Endothelial cell of umbilical vein (primary cell): ENCODE measurements at regions of chr4 and their contacts with region 1.

Region 1: DNA sequence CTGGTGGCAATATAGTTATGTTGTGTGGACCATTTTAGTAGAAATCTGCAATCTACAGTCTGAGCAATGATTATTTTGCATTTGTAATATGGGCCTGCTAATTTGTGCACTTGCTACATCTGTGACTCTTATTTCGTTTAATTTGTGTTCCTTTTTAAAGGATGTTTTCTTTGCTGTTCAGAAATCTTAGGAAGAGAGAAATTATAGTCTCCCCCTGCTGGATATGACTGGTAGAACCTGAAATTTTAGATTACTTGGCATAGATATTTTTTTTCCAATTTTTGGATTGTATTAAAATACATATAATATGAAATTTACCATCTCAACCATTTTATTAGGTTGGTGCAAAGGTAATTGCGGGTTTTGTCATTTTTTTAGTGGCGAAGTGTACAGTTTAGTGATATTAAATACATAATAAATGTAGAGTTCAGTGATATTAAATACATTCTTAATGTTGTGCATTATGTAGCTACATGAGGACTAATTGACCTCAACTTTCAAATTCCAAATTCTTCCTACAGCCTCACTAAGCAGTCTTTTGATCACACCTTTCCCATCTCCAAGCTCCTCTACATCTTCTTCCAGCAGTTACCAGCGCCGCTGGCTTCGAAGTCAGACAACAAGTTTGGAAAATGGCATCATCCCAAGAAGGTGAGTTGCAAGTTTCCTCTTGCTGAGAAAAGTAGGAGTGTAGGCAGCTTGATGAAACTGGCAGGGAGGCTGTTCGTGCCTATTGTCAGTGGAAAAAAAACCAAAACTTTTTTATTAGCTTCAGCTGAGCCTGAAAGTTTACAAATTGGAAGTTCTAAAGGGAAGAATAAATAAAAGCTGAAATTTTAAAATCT is 82.2 kb downstream of the FNIP2 start:
- DNase-seq: peak; percentile 66
- H3K4me3 ChIP-seq: no peak overlapping the region
- H3K27ac ChIP-seq: no peak overlapping the region
- H3K4me1 ChIP-seq: no peaks in the 10 kb centered on the region
- H3K27me3 ChIP-seq: no peaks in the 10 kb centered on the region
- CTCF ChIP-seq: peak; percentile 27 to 31
- POLR2A ChIP-seq: no peak

Region 2: DNA sequence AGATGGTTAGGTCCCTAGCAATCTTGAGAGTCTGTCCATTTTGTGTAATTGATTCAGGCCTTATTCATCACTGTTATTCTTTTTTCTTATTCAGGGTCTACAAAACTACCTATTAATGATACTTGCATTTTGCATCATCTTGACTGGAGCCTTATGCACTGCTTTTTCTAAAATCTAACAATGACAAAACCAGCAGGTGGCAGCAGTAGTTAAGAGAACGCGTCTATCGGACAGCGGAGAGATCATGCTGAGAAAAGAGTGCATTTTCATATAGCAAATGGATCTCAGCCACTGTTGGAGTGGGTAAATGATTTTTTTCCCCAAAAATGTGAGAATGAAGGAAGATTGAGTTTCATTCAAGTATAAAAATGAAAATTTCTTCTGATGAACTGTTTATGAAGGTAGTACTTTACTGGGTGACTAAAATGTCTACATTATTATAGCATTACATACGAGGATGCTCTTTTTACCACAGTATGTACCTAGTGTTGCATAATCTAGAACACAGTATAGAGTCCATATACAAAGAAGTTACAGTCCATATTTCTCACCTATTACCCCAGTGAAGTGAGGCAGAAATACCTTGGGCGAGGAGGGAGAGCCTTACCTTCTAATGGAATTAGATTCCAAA is 597.6 kb before region 1 on chr4:
- CTCF ChIA-PET with region 1: no interaction called
- POLR2A ChIA-PET with region 1: no interaction called
- dilution Hi-C with region 1: no loop called
- intact Hi-C with region 1: loop called (anchors 5 kb)
- DNase-seq: peak; percentile 71
- H3K4me3 ChIP-seq: no peak overlapping the region
- H3K27ac ChIP-seq: no peak overlapping the region
- H3K4me1 ChIP-seq: no peaks in the 10 kb centered on the region
- H3K27me3 ChIP-seq: no peaks in the 10 kb centered on the region
- CTCF ChIP-seq: peak; percentile 60
- POLR2A ChIP-seq: no peak

Region 3: GRCh38 chr4:158722917-158723793 is 127.9 kb before region 1 on chr4 and contains the start of gene PPID:
- CTCF ChIA-PET with region 1: interaction called, 26 read pairs
- POLR2A ChIA-PET with region 1: no interaction called
- dilution Hi-C with region 1: no loop called
- intact Hi-C with region 1: no loop called
- DNase-seq: peak; percentile 80
- H3K4me3 ChIP-seq: peak within 1 kb of the TSS; percentile 67 to 87 (median 76)
- H3K27ac ChIP-seq: peak within 1 kb of the TSS; percentile 68
- H3K4me1 ChIP-seq: peaks cover 8% of the 10 kb centered on the region
- H3K27me3 ChIP-seq: no peaks in the 10 kb centered on the region
- CTCF ChIP-seq: no peak
- POLR2A ChIP-seq: peak; percentile 93
- total RNA-seq, gene PPID: 24.7 and 25.7 TPM in 2 replicates

Region 4: GRCh38 chr4:158768555-158769174 is 82.4 kb before region 1 on chr4 and contains the start of gene FNIP2:
- CTCF ChIA-PET with region 1: interaction called, 22 read pairs
- POLR2A ChIA-PET with region 1: no interaction called
- dilution Hi-C with region 1: no loop called
- intact Hi-C with region 1: loop called (anchors 1 kb)
- DNase-seq: peak; percentile 80
- H3K4me3 ChIP-seq: peak within 1 kb of the TSS; percentile 59 to 80 (median 75)
- H3K27ac ChIP-seq: peak within 1 kb of the TSS; percentile 68
- H3K4me1 ChIP-seq: peaks cover 31% of the 10 kb centered on the region
- H3K27me3 ChIP-seq: no peaks in the 10 kb centered on the region
- CTCF ChIP-seq: no peak
- POLR2A ChIP-seq: peak; percentile 53
- total RNA-seq, gene FNIP2: 13.6 and 14.4 TPM in 2 replicates

Region 5: DNA sequence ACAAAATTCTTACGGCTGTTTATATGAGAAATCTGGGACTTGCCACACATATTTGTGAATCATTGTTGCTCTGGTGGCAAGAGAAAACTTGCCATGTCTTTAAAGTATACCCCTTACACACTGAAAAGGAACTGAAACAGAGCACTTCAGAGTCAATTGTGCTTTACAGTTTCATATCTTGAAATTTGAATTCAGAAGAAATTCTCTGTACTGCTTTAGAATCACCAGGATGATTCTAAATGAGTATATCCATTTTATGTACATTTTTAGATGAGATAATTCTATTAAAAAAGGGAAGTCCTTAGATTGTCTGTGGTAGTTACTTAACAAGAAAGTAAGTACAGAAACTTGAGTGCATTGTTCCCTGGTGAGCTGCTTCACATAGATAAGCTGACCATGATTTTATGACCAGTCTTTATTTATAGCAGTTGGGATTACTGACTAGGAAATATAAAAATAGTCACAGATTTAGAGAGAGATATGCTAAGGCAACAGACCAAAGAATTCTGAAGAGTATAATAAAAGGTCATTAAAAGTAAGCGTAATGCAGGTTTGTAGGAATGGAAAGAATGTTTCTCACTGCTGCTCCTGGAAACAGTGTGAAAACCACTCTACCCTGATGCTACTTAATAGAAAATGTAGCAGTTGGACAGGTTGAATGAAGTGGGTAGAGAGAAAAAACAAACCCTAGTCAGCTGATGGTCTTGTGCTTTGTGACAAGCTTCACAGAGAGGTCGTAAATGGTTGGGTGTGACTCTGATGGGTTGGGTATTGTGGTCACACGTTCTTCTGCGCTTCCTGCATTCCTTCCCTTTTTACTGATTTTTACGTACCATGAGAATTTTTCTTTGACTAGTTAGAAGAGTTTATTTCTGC is 41.2 kb before region 1 on chr4:
- CTCF ChIA-PET with region 1: interaction called, 8 read pairs
- POLR2A ChIA-PET with region 1: no interaction called
- dilution Hi-C with region 1: no loop called
- intact Hi-C with region 1: loop called (anchors 2 kb)
- DNase-seq: peak; percentile 92
- H3K4me3 ChIP-seq: peak overlapping the region in 1 of 3 experiments; percentile 48
- H3K27ac ChIP-seq: peak overlapping the region; percentile 95
- H3K4me1 ChIP-seq: peaks cover 23% of the 10 kb centered on the region
- H3K27me3 ChIP-seq: no peaks in the 10 kb centered on the region
- CTCF ChIP-seq: no peak
- POLR2A ChIP-seq: no peak

Region 6: DNA sequence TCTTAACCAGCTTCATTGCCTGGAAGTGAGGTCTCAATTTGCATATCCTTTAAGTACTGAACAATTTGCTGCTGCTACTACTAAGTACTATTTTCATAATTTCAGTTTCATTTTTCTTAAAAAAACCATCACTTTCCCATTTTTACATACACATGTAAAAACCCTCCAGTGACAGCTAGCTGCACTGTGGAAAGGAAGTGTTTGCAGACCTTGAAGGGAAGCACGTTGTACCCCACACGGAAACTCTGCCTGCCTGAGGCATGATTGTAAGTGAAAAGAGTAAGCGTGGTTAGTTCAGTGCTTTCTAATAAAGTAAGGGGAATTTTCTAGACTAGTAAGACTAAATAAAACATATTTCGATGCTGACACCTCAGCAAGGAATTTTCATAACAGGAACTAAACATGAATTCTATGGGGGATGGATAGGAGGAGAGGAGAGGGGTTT is 355.4 kb after region 1 on chr4:
- CTCF ChIA-PET with region 1: interaction called, 92 read pairs
- POLR2A ChIA-PET with region 1: no interaction called
- dilution Hi-C with region 1: no loop called
- intact Hi-C with region 1: no loop called
- DNase-seq: peak; percentile 73
- H3K4me3 ChIP-seq: no peak overlapping the region
- H3K27ac ChIP-seq: no peak overlapping the region
- H3K4me1 ChIP-seq: peaks cover 27% of the 10 kb centered on the region
- H3K27me3 ChIP-seq: no peaks in the 10 kb centered on the region
- CTCF ChIP-seq: no peak
- POLR2A ChIP-seq: no peak